Pancreas (tissue), 10 donors: ENCODE measurements at regions of chr5 and their contacts with region 1.

Region 1: DNA sequence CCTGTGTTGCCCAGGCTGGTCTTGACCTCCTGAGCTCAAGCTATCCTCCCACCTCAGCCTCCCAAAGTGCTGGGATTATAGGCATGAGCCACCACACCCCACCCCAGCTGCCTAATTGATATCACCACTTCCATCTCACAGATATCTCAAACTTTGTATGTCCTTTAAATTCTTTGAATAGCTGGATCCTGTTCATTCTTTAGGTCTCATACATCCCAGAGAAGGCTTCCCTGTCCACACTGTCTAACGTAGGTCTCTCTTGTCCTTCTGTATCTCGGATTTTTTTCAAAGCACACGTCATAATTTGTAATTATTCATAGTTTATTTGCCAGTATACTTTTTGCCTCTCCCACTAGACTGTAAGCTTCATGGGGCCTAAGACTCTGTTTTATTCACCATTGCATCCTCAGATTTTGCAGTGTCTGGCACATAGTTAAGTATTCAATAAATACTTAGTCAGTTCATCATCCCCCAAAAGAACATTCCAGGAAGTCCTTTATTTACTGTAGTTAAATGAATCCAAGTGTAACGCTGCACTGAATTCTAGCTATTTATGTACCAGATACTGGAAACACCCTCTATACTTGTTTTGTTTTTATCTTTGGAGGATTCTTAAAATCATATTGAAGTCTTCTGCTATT is 10.5 kb downstream of the ARSK start:
- DNase-seq: no peak
- ATAC-seq: no peak
- H3K4me3 ChIP-seq: no peak overlapping the region
- H3K27ac ChIP-seq: no peak overlapping the region
- H3K4me1 ChIP-seq: no peaks in the 10 kb centered on the region
- H3K27me3 ChIP-seq: no peaks in the 10 kb centered on the region
- CTCF ChIP-seq: no peak

Region 2: DNA sequence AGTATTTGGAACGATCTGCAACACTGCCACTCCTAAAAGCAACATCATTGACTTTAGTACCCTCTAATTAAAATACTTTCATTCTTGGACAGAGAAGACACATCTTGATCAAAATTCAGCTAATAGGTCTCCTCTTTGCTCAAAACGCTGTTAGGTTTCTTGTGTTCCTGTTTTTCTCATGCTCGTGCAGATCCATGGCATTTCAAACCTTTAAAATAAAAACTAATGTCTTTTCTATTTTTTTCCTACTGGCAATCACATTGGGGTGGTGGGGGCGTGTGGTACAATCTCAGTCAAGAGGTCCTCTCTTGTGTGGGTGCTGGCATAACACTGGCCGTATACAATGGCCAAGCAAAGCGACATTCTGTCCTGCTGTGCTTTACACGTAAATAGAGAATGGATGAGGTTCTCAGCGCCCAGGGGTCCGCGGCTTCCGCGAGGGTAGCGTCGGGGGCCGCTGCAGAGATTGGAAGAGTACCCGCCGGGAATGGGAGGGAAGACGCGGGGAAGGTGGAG is 54.2 kb after region 1 on chr5:
- intact Hi-C with region 1: loop called in 1 of 3 experiments (anchors 10 kb)
- DNase-seq: peak in 1 of 6 donors; percentile 38
- ATAC-seq: peak; percentile 2 to 8 (median 4)
- H3K4me3 ChIP-seq: peak overlapping the region; percentile 38 to 73 (median 53)
- H3K27ac ChIP-seq: peak overlapping the region; percentile 87 to 96 (median 91)
- H3K4me1 ChIP-seq: peaks cover 12 to 17% (median 16%) of the 10 kb centered on the region in 3 donors
- H3K27me3 ChIP-seq: no peaks in the 10 kb centered on the region
- CTCF ChIP-seq: no peak

Region 3: DNA sequence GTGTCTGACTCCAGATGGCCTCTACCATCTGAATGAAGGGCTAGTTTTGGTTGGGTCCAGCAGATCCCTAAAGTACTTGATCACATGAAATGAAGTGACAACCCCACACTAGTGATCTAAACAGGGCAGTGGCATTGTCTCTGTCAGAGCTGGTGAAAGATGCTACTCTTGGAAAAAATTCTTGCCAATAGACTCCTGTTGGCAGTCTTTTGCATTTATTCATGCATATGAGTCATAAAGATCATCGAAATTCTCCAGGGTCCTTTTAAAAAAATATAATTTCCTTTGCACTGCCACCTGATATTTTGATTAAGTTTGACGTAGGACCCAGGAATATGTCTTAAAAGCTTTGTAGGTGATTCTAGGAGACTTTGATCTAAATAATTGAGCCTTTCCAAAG is 531.3 kb after region 1 on chr5:
- intact Hi-C with region 1: no loop called
- DNase-seq: no peak
- ATAC-seq: no peak
- H3K4me3 ChIP-seq: no peak overlapping the region
- H3K27ac ChIP-seq: no peak overlapping the region
- H3K4me1 ChIP-seq: peaks cover 13 to 27% (median 25%) of the 10 kb centered on the region in 3 donors
- H3K27me3 ChIP-seq: no peaks in the 10 kb centered on the region
- CTCF ChIP-seq: no peak